ENCODE measurements at regions of chr10 and their contacts with region 1.

Region 1: DNA sequence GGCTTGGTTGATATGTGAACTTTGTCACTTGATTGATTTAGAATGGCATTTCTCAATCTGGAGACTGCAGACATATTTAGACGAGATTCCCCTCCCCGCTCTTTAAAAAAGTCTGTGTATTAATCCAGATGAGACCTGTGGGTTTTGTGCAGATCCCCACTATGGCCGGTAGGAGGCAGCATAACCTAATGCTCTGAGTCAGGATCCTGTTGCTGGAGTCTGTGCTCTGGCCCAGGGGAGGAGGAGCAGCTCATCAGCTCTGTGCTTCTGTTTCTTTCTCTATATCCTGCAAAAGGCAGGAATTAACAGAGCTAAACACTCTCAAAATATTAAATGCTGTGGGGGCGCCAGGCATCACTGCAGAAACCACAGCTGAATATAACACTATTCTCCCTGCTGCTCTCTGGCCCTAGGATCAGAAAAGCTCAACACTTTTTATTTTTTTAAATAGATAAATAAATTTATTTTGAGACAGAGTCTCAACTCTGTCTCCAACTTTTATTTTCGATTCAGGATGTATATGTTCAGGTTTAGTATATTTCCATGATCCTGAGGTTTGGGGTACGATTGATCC is 23.9 kb upstream of the SEPHS1 start:
- DNase-seq: peak; percentile 38 to 90
- ATAC-seq: peak; percentile 90 to 100 (median 99)
- H3K4me3 ChIP-seq: no peak overlapping the region
- H3K4me3 Mint-ChIP-seq: no peak overlapping the region
- H3K27ac ChIP-seq: no peak overlapping the region
- H3K27ac Mint-ChIP-seq: no peak overlapping the region
- H3K4me1 ChIP-seq: no peaks in the 10 kb centered on the region
- H3K4me1 Mint-ChIP-seq: peaks cover 0 to 6% of the 10 kb centered on the region in 2 donors
- H3K27me3 ChIP-seq: no peaks in the 10 kb centered on the region
- H3K27me3 Mint-ChIP-seq: peaks cover 0 to 7% of the 10 kb centered on the region in 2 donors
- CTCF ChIP-seq: peak; percentile 95

Region 2: DNA sequence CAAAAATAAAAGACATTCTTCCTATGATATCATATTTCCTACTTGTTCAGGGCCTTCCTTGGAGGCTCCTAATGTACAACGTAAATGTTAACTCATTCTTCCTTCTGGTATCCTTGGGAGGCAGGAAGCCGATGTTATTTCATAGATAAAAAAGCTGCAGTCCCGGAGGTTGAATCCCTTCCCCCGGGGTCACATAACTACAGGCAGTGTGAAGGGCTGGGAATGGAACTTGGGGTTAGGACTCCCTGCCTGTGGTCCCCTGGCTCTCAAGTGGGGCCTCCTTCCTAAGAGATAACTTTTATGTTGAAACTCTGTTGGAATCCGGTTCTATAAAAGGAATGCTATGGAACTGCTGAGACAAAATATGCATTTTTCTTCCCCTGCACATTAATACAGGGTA is 355.6 kb before region 1 on chr10:
- intact Hi-C with region 1: no loop called
- DNase-seq: no peak
- ATAC-seq: no peak
- H3K4me3 ChIP-seq: no peak overlapping the region
- H3K4me3 Mint-ChIP-seq: no peak overlapping the region
- H3K27ac ChIP-seq: no peak overlapping the region
- H3K27ac Mint-ChIP-seq: no peak overlapping the region
- H3K4me1 ChIP-seq: no peaks in the 10 kb centered on the region
- H3K4me1 Mint-ChIP-seq: no peaks in the 10 kb centered on the region
- H3K27me3 ChIP-seq: no peaks in the 10 kb centered on the region
- H3K27me3 Mint-ChIP-seq: peaks cover 10 to 12% of the 10 kb centered on the region in 2 donors
- CTCF ChIP-seq: no peak

Region 3: GRCh38 chr10:13440185-13441061 is 68.4 kb after region 1 on chr10:
- intact Hi-C with region 1: loop called (anchors 1 kb)
- DNase-seq: peak; percentile 38 to 76
- ATAC-seq: peak; percentile 83 to 97 (median 94)
- H3K4me3 ChIP-seq: no peak overlapping the region
- H3K4me3 Mint-ChIP-seq: peak overlapping the region; percentile 58
- H3K27ac ChIP-seq: no peak overlapping the region
- H3K27ac Mint-ChIP-seq: no peak overlapping the region
- H3K4me1 ChIP-seq: peaks cover 13% of the 10 kb centered on the region
- H3K4me1 Mint-ChIP-seq: peaks cover 7 to 14% of the 10 kb centered on the region in 2 donors
- H3K27me3 ChIP-seq: peaks cover 4% of the 10 kb centered on the region
- H3K27me3 Mint-ChIP-seq: peaks cover 26 to 58% of the 10 kb centered on the region in 2 donors
- CTCF ChIP-seq: peak; percentile 86

Measured in natural killer cell (primary cell).